Dorsolateral prefrontal cortex (tissue), 120 donors: ENCODE measurements at regions of chr9 and their contacts with region 1.

Region 1: DNA sequence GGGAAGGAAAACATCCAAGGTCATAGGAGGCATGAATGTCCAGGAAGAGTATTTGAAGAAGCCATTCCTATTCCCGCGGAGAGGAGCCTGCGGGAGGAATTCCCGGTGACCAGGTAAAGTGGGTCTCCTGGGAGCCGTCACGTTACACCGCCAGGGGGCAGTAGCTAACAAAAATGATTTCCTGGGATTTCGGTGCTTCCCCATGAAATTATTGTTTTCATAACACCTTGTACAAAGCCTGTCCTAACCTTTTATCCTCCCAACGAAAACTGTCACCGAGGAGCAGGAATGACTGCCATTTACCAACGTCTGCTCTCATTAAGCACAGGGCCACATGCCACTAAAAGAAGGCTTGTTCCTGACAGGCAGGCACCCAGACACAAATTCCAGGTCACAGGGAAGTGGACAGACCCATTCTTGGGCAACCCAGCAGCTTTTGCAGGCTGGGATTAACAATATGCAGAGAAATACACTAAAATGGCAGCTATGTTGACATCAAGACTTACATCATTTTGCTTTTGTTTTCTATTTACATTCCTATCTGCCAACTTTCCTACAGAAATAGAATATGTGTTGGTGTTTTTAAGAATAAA is 41.2 kb upstream of the CTSL start:
- DNase-seq: peak in 6 of 10 donors; percentile 26 to 69 (median 63)
- H3K4me3 ChIP-seq: peak overlapping the region in 2 of 59 donors; percentile 10 to 16
- H3K27ac ChIP-seq: peak overlapping the region in 32 of 59 donors; percentile 6 to 84 (median 64)
- H3K27me3 ChIP-seq: no peaks in the 10 kb centered on the region
- CTCF ChIP-seq: peak; percentile 61 to 94 (median 87)

Region 2: GRCh38 chr9:87640385-87640795 is 44.3 kb before region 1 on chr9:
- intact Hi-C with region 1: no loop called
- DNase-seq: no peak
- H3K4me3 ChIP-seq: no peak overlapping the region
- H3K27ac ChIP-seq: peak overlapping the region in 7 of 59 donors; percentile 1 to 36 (median 14)
- H3K27me3 ChIP-seq: no peaks in the 10 kb centered on the region
- CTCF ChIP-seq: no peak

Region 3: DNA sequence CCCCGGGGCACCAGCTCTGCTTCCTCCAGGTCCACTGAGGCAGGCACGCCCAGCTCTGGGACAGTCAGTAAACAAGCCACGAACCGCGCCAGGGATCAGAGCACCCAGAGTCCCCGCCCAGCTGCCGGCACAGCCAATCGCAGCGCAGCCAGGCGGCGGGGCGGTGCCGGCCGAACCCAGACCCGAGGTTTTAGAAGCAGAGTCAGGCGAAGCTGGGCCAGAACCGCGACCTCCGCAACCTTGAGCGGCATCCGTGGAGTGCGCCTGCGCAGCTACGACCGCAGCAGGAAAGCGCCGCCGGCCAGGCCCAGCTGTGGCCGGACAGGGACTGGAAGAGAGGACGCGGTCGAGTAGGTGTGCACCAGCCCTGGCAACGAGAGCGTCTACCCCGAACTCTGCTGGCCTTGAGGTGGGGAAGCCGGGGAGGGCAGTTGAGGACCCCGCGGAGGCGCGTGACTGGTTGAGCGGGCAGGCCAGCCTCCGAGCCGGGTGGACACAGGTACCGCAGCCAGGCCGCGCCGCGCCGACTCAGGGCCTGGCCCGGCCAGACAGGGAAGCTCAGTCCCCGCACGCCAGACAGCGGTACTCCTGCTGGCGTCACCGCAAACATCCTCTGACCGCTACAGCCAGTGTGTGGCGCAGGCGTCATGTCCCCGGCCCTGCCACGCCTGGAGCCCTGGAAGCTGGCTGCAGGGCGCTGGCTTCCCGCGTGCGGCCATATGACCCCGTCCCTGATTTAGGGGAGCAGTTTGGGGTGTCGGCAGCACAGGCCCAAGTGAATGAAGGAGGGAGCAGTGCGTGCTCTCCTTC is 41.4 kb after region 1 on chr9 and contains the start of gene CTSL:
- intact Hi-C with region 1: loop called (anchors 2 to 5 kb)
- DNase-seq: peak; percentile 93 to 97 (median 96)
- H3K4me3 ChIP-seq: peak within 1 kb of the TSS; percentile 61 to 95 (median 86)
- H3K27ac ChIP-seq: peak within 1 kb of the TSS; percentile 82 to 99 (median 97)
- H3K27me3 ChIP-seq: no peaks in the 10 kb centered on the region
- CTCF ChIP-seq: peak in 44 of 56 donors; percentile 3 to 64 (median 33)
- total RNA-seq, gene CTSL: 39.8 to 104 (median 62.7) TPM

Region 4: GRCh38 chr9:87973730-87974292 is 289.1 kb after region 1 on chr9:
- intact Hi-C with region 1: loop called in 1 of 2 experiments (anchors 5 kb)
- DNase-seq: peak in 1 of 10 donors; percentile 47
- H3K4me3 ChIP-seq: peak overlapping the region; percentile 53 to 93 (median 76)
- H3K27ac ChIP-seq: peak overlapping the region in 56 of 59 donors; percentile 16 to 94 (median 86)
- H3K27me3 ChIP-seq: no peaks in the 10 kb centered on the region
- CTCF ChIP-seq: no peak

Region 5: GRCh38 chr9:88041447-88041846 is 356.7 kb after region 1 on chr9:
- intact Hi-C with region 1: loop called (anchors 5 to 10 kb)
- DNase-seq: no peak
- H3K4me3 ChIP-seq: no peak overlapping the region
- H3K27ac ChIP-seq: no peak overlapping the region
- H3K27me3 ChIP-seq: no peaks in the 10 kb centered on the region
- CTCF ChIP-seq: peak in 54 of 56 donors; percentile 11 to 70 (median 48)

Region 6: DNA sequence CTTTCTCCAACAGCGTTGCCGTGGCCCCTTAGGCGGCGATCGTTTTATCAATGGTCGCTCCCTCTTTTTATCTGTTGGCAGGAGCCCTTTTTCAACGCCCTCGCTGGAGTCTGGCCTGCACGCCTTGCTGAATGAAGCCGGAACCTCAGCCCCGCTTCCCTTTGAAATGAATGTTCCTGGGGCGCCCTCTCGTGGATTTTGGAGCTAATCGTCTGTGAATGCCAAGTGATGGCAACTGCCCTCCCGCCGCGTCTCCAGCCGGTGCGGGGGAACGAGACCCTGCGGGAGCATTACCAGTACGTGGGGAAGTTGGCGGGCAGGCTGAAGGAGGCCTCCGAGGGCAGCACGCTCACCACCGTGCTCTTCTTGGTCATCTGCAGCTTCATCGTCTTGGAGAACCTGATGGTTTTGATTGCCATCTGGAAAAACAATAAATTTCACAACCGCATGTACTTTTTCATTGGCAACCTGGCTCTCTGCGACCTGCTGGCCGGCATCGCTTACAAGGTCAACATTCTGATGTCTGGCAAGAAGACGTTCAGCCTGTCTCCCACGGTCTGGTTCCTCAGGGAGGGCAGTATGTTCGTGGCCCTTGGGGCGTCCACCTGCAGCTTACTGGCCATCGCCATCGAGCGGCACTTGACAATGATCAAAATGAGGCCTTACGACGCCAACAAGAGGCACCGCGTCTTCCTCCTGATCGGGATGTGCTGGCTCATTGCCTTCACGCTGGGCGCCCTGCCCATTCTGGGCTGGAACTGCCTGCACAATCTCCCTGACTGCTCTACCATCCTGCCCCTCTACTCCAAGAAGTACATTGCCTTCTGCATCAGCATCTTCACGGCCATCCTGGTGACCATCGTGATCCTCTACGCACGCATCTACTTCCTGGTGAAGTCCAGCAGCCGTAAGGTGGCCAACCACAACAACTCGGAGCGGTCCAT is 1316.5 kb after region 1 on chr9:
- intact Hi-C with region 1: loop called (anchors 5 kb)
- DNase-seq: peak; percentile 76 to 92 (median 88)
- H3K4me3 ChIP-seq: peak overlapping the region in 51 of 59 donors; percentile 3 to 62 (median 34)
- H3K27ac ChIP-seq: peak overlapping the region in 30 of 59 donors; percentile 4 to 78 (median 40)
- H3K27me3 ChIP-seq: no peaks in the 10 kb centered on the region
- CTCF ChIP-seq: peak; percentile 33 to 90 (median 82)